Common myeloid progenitor, CD34-positive (primary cell): ENCODE measurements at regions of chr6 and their contacts with region 1.

Region 1: GRCh38 chr6:149834513-149835481 is 29.4 kb downstream of the LRP11 start:
- DNase-seq: peak; percentile 73 to 86 (median 77)
- H3K4me3 ChIP-seq: no peak overlapping the region
- H3K27ac ChIP-seq: no peak overlapping the region
- H3K4me1 ChIP-seq: no peaks in the 10 kb centered on the region
- H3K27me3 ChIP-seq: peaks cover 0 to 2% (median 0%) of the 10 kb centered on the region in 5 experiments

Region 2: DNA sequence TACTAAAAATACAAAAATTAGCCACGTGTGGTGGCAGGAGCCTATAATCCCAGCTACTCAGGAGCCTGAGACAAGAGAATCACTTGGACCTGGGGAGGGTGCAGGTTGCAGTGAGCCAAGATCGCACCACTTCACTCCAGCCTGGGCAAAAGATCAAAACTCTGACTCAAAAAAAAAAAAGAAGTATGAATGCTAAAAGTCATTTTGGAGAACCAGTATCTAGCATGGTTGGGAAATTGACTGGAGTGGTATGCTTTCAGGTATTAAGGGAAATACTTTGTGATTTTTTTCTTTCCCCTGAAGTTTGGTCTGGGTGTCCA is 55.2 kb before region 1 on chr6:
- CTCF ChIA-PET with region 1: no interaction called
- POLR2A ChIA-PET with region 1: no interaction called
- DNase-seq: no peak
- H3K4me3 ChIP-seq: no peak overlapping the region
- H3K27ac ChIP-seq: no peak overlapping the region
- H3K4me1 ChIP-seq: no peaks in the 10 kb centered on the region
- H3K27me3 ChIP-seq: no peaks in the 10 kb centered on the region

Region 3: DNA sequence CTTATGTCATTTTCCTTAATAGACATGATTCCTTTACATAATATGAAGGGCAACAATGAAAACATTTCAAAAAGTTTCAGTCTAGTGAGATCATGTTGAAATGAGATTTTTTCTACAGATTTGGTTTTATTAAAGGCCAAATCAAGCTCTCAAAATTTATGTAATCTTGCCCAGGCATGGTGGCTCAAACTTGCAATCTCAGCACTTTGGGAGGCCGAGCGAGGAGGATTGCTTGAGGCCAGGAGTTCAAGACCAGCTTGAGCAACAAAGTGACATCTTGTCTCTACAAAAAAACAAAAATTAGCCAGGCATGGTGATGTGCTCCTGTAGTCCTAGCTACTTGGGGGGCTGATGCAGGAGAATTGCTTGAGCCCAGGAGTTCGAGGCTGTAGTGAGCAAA is 21.4 kb before region 1 on chr6:
- CTCF ChIA-PET with region 1: interaction called, 10 read pairs
- POLR2A ChIA-PET with region 1: no interaction called
- DNase-seq: no peak
- H3K4me3 ChIP-seq: no peak overlapping the region
- H3K27ac ChIP-seq: no peak overlapping the region
- H3K4me1 ChIP-seq: peaks cover 0 to 10% (median 4%) of the 10 kb centered on the region in 4 experiments
- H3K27me3 ChIP-seq: no peaks in the 10 kb centered on the region

Region 4: GRCh38 chr6:149846321-149846720 is 11.5 kb after region 1 on chr6:
- CTCF ChIA-PET with region 1: interaction called, 37 read pairs
- POLR2A ChIA-PET with region 1: no interaction called
- DNase-seq: no peak
- H3K4me3 ChIP-seq: no peak overlapping the region
- H3K27ac ChIP-seq: no peak overlapping the region
- H3K4me1 ChIP-seq: no peaks in the 10 kb centered on the region
- H3K27me3 ChIP-seq: peaks cover 0 to 29% (median 11%) of the 10 kb centered on the region in 5 experiments

Region 5: DNA sequence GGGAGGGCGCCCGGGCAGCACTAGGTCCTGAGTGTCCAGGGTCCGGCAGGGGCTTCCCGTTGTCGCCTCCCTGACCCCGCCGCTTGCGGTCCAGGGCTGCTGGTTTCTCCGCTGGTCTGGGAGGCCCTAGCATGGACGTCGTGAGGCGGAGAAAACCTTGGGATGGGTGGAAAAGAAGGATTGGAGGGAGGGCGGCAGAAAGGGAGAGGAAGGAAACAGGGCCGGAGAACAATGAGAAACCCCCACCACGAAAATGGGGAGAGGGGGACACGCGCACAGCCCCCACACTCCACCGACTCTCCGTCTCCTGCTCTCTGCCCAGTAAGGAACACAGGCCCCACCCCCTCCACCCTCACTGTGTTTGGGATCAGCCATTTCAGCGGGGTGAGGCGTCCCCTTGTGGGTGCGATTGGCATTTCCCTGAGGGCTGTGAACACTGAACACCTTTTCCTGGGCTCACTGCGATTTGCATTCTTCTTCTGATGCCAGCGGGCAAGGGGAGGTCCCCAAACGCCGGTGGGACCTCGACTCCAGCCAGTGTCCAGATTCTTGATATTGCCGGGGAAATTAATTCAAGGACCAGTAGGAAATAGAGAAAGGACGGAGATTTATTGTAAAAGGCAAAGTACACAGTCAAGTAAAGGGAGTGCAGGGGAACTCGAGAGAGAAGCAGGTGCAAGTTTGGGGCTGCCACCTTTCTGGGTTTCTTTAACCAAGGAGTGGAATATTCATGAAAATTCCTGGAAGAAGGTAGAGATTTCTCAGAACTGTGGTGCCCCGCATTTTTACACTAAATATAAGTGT is 91.4 kb after region 1 on chr6:
- CTCF ChIA-PET with region 1: interaction called, 21 read pairs
- POLR2A ChIA-PET with region 1: no interaction called
- DNase-seq: peak; percentile 67 to 82 (median 80)
- H3K4me3 ChIP-seq: peak overlapping the region in 6 of 7 experiments; percentile 5 to 73 (median 57)
- H3K27ac ChIP-seq: no peak overlapping the region
- H3K4me1 ChIP-seq: peaks cover 0 to 26% (median 24%) of the 10 kb centered on the region in 4 experiments
- H3K27me3 ChIP-seq: peaks cover 10 to 85% (median 51%) of the 10 kb centered on the region in 5 experiments